Mammary epithelial cell (primary cell): ENCODE measurements at regions of chr12 and their contacts with region 1.

Region 1: DNA sequence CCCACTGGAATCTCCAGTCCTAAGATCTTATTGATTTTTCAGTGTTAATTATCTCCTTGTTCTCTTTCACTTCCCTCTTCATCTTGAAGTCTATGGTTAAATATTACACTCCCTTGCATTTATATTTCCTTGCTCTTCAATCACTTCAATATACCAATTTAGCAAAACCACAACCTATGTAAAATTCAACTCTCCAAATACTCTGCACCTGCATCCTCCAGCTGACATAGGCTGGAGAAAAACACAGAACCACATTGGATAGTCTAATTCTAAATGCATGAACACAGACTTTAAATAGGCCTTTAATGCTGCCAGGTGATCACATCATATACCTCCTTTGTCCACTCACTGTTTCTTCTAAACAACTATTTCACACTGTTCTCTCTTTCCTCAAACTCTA is 253.8 kb upstream of the GARIN6 start:
- DNase-seq: no peak
- H3K4me3 ChIP-seq: no peak overlapping the region
- H3K27ac ChIP-seq: no peak overlapping the region
- H3K4me1 ChIP-seq: no peaks in the 10 kb centered on the region
- H3K27me3 ChIP-seq: peaks cover 2% of the 10 kb centered on the region
- CTCF ChIP-seq: no peak

Region 2: DNA sequence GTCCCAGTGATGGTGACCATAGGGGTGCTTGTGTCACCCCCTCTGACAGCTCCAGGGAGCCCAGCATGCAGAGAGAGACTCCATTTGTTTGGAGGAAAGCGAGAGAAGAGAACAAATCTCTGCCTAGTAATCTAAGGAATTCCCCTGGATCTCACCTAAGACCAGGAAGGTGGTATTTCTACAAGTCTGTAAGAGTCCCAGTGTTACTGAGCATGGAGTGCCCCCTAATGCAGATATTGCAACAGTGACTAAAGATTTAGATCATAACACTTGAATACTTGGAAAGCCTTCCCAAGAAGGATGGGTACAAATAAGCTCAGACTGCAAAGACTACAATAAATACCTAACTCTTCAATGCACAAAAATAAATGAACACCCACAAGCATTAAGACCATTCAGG is 106.6 kb before region 1 on chr12:
- CTCF ChIA-PET with region 1: no interaction called
- dilution Hi-C with region 1: no loop called
- in situ Hi-C with region 1: no loop called
- intact Hi-C with region 1: no loop called
- DNase-seq: no peak
- H3K4me3 ChIP-seq: no peak overlapping the region
- H3K27ac ChIP-seq: no peak overlapping the region
- H3K4me1 ChIP-seq: no peaks in the 10 kb centered on the region
- H3K27me3 ChIP-seq: no peaks in the 10 kb centered on the region
- CTCF ChIP-seq: no peak

Region 3: GRCh38 chr12:99302874-99303273 is 90.9 kb before region 1 on chr12:
- CTCF ChIA-PET with region 1: no interaction called
- dilution Hi-C with region 1: no loop called
- in situ Hi-C with region 1: no loop called
- intact Hi-C with region 1: no loop called
- DNase-seq: no peak
- H3K4me3 ChIP-seq: no peak overlapping the region
- H3K27ac ChIP-seq: no peak overlapping the region
- H3K4me1 ChIP-seq: no peaks in the 10 kb centered on the region
- H3K27me3 ChIP-seq: no peaks in the 10 kb centered on the region
- CTCF ChIP-seq: no peak

Region 4: GRCh38 chr12:99334285-99335056 is 59.3 kb before region 1 on chr12:
- CTCF ChIA-PET with region 1: no interaction called
- dilution Hi-C with region 1: no loop called
- in situ Hi-C with region 1: no loop called
- intact Hi-C with region 1: no loop called
- DNase-seq: no peak
- H3K4me3 ChIP-seq: no peak overlapping the region
- H3K27ac ChIP-seq: no peak overlapping the region
- H3K4me1 ChIP-seq: no peaks in the 10 kb centered on the region
- H3K27me3 ChIP-seq: no peaks in the 10 kb centered on the region
- CTCF ChIP-seq: no peak

Region 5: DNA sequence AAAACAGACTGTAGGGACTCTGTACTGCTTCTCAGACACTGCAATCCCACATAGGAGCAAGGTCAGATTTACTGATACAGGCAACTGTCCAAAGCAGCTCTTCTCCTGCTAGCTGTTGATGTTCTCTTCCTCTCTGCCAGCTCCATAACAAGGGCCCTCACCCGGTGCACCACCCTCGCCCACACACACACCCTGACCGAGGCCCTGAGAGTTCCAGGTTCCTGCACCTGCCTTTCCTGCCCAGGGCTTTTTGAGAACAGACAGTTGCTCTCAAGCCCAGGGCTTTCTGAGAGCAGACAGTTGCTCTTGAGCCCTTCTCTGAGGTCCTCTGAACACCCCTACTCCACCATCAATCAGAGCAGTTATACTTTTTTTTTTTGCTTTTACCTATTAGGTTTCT is 20.0 kb after region 1 on chr12:
- CTCF ChIA-PET with region 1: no interaction called
- dilution Hi-C with region 1: no loop called
- in situ Hi-C with region 1: no loop called
- intact Hi-C with region 1: loop called (anchors 1 kb)
- DNase-seq: no peak
- H3K4me3 ChIP-seq: no peak overlapping the region
- H3K27ac ChIP-seq: no peak overlapping the region
- H3K4me1 ChIP-seq: no peaks in the 10 kb centered on the region
- H3K27me3 ChIP-seq: no peaks in the 10 kb centered on the region
- CTCF ChIP-seq: no peak

Region 6: GRCh38 chr12:99852666-99853065 is 458.9 kb after region 1 on chr12:
- CTCF ChIA-PET with region 1: no interaction called
- dilution Hi-C with region 1: no loop called
- in situ Hi-C with region 1: no loop called
- intact Hi-C with region 1: no loop called
- DNase-seq: no peak
- H3K4me3 ChIP-seq: no peak overlapping the region
- H3K27ac ChIP-seq: no peak overlapping the region
- H3K4me1 ChIP-seq: no peaks in the 10 kb centered on the region
- H3K27me3 ChIP-seq: no peaks in the 10 kb centered on the region
- CTCF ChIP-seq: no peak